ENCODE measurements at regions of chr7 and their contacts with region 1.

Region 1: GRCh38 chr7:33062782-33063443 is 337 bp upstream of the NT5C3A start:
- H3K4me3 Mint-ChIP-seq: peak overlapping the region; percentile 92
- H3K27ac Mint-ChIP-seq: peak overlapping the region; percentile 91
- H3K4me1 Mint-ChIP-seq: peaks cover 28% of the 10 kb centered on the region
- H3K27me3 Mint-ChIP-seq: no peaks in the 10 kb centered on the region

Region 2: DNA sequence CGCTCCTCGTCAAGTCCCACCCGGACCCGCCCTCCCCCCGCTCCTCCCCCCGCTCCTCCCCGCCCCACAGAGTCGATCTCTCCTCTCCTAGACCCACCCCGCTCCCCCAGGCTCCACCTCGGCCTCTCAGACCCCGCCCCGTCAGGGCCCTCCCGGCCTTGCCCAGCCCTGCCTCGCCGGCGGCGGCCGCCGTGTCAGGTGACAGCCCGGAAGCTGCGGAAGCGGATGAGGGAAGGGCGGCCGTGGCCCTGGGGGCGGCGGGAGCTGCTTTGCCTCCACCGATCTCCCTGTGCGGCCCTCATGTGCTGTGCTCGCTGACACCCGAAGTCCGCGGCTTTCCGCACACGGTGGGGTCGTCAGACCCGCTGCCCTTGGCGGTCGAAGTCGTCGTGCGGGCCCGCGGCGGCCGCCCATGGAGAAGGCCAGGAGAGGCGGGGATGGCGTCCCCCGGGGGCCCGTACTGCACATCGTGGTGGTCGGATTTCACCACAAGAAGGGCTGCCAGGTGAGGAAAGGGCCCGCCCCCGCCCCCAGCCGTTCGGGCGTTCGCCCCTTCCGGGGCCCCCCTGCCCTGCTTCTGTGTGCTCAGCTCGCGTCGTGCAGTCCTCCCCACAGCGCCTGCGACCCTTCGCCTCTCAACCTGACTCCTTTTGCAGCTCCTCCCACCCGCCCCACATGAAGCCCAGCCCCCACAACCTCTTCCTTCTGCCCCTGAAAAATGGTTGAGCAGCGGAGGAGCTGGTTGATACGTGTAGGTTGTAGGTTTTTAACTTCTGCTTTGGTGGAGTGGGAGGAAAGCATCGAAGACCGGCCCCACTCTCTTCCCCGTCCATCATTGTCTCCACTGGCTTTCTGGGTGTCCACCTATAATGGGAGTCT is 567.4 kb before region 1 on chr7 and contains the start of gene AVL9:
- intact Hi-C with region 1: loop called (anchors 10 kb)
- H3K4me3 Mint-ChIP-seq: peak within 1 kb of the TSS; percentile 95
- H3K27ac Mint-ChIP-seq: peak within 1 kb of the TSS; percentile 99
- H3K4me1 Mint-ChIP-seq: peaks cover 23% of the 10 kb centered on the region
- H3K27me3 Mint-ChIP-seq: no peaks in the 10 kb centered on the region

Region 3: DNA sequence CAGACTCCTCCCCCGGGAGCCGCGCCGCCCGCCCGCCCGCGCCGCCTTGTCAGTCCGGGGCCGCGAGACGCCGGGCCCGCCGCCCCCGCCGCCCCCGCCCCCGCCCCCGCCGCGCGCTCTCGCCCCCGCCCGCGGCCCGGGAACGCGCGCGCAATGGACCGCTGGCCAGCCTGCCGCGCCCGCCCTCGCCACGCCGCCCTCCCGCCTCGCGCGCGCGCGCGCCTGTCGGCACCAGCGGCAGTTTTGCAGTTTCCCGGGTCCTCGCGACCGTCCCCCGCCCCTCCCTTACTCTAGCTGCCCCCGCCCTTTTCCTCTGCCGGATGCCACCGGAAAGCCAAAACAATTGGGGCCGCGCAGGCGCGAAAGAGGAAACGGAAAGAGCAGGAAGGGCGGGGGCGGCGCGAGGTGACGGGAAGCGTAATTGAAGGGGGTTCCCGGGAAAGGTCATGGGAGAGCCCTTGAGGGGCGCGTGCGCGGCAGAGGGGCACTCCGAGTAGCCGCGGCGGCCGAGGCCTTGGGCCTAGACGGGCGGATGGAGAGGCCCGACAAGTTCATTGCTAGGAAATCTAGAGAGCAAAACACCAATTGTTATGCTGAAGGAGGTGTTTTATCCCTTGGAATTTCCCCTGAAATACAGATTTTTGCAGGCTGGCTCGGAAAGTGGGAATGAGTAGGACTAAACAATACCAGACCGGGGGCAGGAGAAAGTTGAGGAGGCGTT is 171.0 kb before region 1 on chr7:
- intact Hi-C with region 1: loop called (anchors 5 kb)
- H3K4me3 Mint-ChIP-seq: peak overlapping the region; percentile 88
- H3K27ac Mint-ChIP-seq: peak overlapping the region; percentile 100
- H3K4me1 Mint-ChIP-seq: peaks cover 48% of the 10 kb centered on the region
- H3K27me3 Mint-ChIP-seq: no peaks in the 10 kb centered on the region

Region 4: GRCh38 chr7:32957326-32958045 is 105.4 kb before region 1 on chr7 and contains the start of gene FKBP9:
- intact Hi-C with region 1: loop called (anchors 5 kb)
- H3K4me3 Mint-ChIP-seq: peak within 1 kb of the TSS; percentile 82
- H3K27ac Mint-ChIP-seq: peak within 1 kb of the TSS; percentile 82
- H3K4me1 Mint-ChIP-seq: peaks cover 9% of the 10 kb centered on the region
- H3K27me3 Mint-ChIP-seq: peaks cover 20% of the 10 kb centered on the region

Region 5: GRCh38 chr7:33039257-33039902 is 23.5 kb before region 1 on chr7:
- intact Hi-C with region 1: loop called (anchors 2 kb)
- H3K4me3 Mint-ChIP-seq: peak overlapping the region; percentile 75
- H3K27ac Mint-ChIP-seq: peak overlapping the region; percentile 60
- H3K4me1 Mint-ChIP-seq: peaks cover 32% of the 10 kb centered on the region
- H3K27me3 Mint-ChIP-seq: no peaks in the 10 kb centered on the region

Region 6: DNA sequence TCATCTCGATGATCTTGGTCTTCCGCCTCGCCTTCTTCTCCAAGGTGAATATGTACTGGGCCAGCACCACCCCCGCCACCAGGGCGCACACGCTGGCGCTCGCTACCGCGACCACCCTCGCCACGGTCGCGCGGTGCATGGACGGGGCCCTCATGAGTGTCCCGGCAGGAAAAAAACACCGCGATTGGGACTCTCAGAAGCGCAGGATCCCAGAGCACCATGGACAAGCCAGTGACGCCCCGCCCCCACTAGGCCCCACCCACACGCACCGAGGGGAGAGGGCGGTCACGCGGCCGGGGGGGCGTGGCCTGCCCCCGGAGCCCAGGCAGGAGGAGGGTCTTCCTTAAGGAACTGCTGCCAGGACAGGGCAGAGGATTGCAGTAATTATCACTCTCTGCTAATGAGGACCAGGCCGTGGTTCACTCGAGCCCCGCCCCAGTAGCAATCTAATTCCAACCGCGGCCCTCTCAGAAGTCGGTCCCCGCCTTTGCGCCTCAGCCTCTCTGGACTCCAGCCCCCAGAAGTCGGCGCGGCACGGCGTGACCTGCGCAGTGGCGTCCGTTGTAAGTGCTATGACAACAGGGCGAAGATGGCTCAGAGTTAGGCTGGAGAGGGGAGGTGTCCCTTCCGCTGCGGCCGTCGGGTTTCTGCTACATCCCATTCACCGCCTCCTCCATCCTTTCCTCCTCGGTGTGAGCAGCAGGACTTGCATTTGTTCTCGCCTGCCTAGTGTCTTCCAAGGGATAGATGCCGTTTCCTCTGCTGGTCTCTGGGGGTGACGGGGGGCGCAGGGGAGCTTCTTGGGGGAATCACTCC is 66.3 kb after region 1 on chr7 and contains the start of gene BBS9:
- intact Hi-C with region 1: loop called (anchors 2 kb)
- H3K4me3 Mint-ChIP-seq: peak within 1 kb of the TSS; percentile 97
- H3K27ac Mint-ChIP-seq: peak within 1 kb of the TSS; percentile 82
- H3K4me1 Mint-ChIP-seq: no peaks in the 10 kb centered on the region
- H3K27me3 Mint-ChIP-seq: no peaks in the 10 kb centered on the region

Measured in dendritic cell treated with granulocyte-macrophage colony-stimulating factor and Interleukin-4, amounts not matched to agents 40 ng/mL and 50 ng/mL, for 4 days (primary cell).